Right ventricle myocardium superior (tissue), 1 donor: ENCODE measurements at regions of chr3 and their contacts with region 1.

Region 1: DNA sequence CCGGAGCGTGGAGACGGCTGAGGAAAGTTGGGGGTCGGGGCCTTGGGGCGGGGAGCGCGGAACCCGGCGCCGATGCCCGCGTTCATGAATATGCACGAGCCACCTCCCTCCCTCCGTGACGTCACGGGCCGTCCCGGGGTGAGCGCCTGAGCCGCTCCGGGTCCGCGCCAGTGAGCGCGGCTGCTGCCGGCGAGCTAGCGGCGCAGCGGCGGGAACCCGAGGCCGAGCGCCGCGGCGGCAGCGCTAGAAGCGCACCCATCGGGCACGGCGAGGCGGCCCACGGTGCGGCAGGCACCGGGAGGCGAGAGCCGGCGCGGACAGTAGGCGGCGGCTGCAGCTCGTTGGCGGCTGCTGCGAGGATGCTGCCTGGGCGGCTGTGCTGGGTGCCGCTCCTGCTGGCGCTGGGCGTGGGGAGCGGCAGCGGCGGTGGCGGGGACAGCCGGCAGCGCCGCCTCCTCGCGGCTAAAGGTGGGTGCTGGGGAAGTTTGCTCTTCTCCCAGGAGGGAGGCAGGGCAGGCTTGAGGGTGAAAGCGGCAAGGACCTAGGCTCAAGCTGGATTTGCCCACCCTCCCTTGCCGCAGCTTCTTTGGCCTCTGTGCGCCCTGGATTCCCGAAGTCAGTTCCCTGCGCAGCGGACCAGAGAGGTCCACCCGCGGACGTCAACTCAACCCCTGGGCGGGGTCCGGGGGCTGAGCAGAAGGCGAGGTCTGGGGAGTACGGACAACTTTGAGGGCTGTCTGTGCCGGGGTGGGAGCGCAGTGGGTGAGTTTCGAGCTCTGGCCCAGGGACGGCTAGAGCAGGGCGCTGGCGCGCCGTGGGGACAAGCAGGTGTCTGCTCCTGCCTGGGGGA is at the start of gene CLSTN2:
- DNase-seq: peak; percentile 86
- ATAC-seq: peak; percentile 89
- total RNA-seq, gene CLSTN2: 7.8 TPM

Region 2: DNA sequence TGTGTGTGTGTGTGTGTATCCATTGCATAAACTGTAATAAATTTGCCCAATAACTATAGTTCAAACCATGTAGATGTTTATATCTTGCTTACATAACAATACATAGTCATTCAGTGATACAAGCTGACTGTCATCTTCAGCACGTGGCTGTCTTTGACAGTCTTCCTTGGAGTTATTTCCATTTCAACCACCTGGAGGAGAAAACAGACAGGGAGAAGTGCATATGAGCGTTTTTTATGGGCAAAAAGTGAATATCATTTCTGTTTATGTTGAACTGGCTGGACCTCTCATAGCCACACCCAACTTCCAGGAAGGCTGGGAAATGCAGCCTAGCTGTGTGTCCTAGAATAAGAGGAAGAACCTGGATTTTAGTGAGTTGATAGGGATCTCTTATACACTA is 77.8 kb before region 1 on chr3:
- intact Hi-C with region 1: no loop called
- DNase-seq: no peak
- ATAC-seq: no peak

Region 3: GRCh38 chr3:140004271-140004670 is 69.0 kb after region 1 on chr3:
- intact Hi-C with region 1: no loop called
- DNase-seq: no peak
- ATAC-seq: no peak

Region 4: GRCh38 chr3:140051019-140051957 is 116.0 kb after region 1 on chr3:
- intact Hi-C with region 1: loop called (anchors 10 kb)
- DNase-seq: no peak
- ATAC-seq: peak; percentile 69